ENCODE measurements at regions of chr18 and their contacts with region 1.

Region 1: DNA sequence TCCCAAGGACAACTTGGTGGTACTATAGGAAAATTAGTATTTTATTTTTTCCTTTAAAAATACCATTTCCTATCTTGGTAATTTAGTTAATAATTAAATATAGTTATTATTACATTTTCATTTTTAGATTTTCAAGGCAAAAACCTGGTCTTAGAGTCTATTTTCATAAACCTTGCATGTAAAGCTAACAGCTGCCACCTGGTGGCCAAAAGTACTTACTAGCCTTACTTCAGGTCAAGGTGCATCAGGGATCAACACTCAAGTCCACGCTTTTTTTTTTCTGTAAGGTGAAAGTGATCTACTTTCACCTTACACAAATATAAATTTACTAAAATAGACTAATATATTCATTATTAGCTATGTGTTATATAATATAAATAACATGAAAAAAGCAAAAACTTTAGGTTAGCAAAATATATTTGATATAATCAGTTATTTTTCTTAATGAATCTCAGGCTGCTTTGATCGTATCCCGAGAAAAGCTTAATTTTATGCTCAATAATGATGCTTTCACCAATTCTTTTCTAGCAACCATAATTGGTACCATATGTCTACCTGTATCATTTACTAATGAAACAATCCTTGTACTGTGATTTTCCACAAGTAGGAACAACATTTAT is 62.5 kb downstream of the RELCH start:
- DNase-seq: peak in 7 of 10 donors; percentile 34 to 84 (median 53)

Region 2: DNA sequence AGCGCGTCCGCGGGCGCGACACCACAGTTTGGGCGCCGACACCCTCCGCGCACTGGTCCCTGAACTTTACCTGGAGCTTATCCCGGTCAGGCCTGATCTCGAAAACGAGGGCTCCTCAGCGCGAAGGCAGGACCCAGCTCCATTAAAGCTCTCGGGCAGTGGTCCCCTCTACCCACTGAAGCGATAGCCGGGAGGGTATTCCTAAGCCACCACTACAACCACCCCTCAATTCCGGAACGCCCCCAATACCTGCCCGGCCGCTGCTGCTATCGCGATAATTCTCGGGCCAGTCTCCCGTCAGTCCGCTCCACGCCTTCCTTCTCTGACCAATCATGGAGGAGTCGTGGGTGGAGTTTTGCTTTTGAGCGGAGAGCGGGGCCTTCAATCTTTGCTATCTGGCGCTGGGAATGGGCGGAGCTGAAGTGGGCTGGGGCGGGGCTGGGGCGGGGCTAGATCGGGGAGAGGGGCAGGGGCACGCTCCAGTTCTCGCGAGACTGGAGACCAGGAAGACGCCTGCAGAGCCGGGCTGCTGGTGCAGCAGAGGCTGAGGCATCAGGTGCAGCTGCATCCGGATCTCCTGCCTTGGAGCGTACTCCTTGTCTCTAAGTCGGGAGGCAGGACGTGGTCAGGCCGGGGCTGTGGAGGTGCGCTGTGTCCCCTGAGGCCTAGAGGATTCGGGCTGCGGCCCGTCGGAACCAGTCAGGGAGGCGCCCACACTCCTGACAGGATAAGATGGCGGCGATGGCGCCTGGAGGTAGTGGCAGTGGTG is 62.6 kb before region 1 on chr18 and contains the starts of genes PIGN and RELCH:
- intact Hi-C with region 1: loop called (anchors 1 kb)
- DNase-seq: peak; percentile 91 to 99 (median 95)